Mammary epithelial cell (primary cell): ENCODE measurements at regions of chr17 and their contacts with region 1.

Region 1: DNA sequence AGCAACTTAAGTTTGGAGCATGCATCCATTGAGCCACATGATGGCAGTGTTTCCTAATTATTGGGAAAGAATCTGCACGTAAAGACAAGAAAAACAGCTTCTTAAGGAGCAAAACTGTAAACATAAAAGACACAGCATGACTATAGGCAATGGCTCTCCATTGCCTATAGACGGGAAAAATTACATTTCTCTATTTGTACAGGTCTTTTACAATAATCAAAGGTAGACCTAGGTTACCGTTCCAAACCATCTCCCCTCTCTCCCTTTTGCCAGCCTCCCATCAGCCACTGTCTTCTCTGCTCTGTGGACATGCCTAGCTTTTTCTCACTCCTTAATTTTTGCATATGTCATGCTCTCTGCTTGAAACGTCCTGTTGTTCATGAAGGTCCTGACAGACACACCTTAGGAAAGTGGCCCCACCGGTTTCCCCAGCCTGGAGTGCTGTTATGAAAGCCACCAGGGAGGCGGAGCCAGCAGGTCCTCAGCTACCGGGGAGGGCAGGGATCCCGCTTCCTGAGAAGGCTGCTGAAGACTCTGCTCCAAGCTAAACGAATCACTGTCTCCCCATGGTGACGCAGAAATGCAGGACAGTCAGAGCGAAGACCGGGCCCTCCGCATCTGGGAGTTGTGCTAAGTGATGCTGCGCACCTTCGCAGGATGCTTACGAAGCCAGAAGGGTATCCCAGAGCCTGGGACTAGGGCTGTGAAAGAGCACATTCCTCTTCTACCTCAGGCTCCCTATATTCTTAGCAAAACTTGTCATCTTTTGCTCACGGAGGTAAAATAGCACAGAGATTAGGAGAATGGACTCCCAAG is 2.2 kb upstream of the SLC16A11 start:
- DNase-seq: peak; percentile 84
- H3K4me3 ChIP-seq: peak overlapping the region; percentile 20 to 26 (median 22)
- H3K27ac ChIP-seq: peak overlapping the region; percentile 73
- H3K4me1 ChIP-seq: peaks cover 31% of the 10 kb centered on the region
- H3K27me3 ChIP-seq: peaks cover 9% of the 10 kb centered on the region
- CTCF ChIP-seq: peak; percentile 79 to 88

Region 2: DNA sequence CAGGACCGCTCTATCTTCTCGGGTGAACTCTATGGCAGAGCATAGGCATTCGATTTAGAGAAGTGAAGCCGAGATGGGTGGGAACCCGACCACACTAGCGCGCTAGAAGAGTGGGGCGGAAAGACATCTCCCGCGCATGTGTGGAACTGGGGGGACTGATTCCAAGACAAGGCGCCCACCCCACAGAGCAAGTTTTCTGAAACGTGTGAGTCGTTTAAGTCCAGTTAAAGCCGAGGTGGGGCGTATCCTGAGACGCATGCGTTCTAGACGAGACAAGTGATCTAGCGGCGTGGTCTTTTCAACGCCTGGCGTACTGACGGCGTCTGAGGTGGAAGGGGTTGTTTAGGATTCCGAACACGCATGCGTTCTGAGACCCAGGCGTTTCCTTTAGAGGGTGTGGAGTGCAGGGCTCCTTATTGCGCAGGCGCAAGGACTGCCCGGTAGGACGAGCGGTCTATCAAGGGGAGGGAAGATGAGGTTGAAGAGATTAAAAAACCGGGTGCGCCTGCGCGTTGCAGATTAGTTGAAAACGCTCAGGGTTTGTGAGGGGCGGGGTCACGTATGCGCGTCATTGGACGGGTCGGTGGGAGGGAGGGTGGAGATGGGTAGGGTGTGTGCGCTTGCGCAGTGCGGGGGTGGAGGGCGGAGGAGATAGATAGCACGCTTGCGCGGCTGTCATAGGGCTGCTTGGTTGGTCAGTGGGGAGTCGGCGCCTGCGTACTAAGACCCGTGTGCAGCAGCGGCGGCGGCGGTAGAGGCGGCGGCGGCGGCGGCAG is 261.0 kb after region 1 on chr17 and contains the start of gene EIF5A:
- CTCF ChIA-PET with region 1: interaction called, 12 read pairs
- dilution Hi-C with region 1: no loop called
- in situ Hi-C with region 1: loop called in 1 of 2 experiments (anchors 10 kb)
- intact Hi-C with region 1: no loop called
- DNase-seq: peak; percentile 100
- H3K4me3 ChIP-seq: peak within 1 kb of the TSS; percentile 79 to 91 (median 80)
- H3K27ac ChIP-seq: peak within 1 kb of the TSS; percentile 91
- H3K4me1 ChIP-seq: peaks cover 24% of the 10 kb centered on the region
- H3K27me3 ChIP-seq: no peaks in the 10 kb centered on the region
- CTCF ChIP-seq: no peak
- total RNA-seq, gene EIF5A: 597 to 1,021 TPM

Region 3: DNA sequence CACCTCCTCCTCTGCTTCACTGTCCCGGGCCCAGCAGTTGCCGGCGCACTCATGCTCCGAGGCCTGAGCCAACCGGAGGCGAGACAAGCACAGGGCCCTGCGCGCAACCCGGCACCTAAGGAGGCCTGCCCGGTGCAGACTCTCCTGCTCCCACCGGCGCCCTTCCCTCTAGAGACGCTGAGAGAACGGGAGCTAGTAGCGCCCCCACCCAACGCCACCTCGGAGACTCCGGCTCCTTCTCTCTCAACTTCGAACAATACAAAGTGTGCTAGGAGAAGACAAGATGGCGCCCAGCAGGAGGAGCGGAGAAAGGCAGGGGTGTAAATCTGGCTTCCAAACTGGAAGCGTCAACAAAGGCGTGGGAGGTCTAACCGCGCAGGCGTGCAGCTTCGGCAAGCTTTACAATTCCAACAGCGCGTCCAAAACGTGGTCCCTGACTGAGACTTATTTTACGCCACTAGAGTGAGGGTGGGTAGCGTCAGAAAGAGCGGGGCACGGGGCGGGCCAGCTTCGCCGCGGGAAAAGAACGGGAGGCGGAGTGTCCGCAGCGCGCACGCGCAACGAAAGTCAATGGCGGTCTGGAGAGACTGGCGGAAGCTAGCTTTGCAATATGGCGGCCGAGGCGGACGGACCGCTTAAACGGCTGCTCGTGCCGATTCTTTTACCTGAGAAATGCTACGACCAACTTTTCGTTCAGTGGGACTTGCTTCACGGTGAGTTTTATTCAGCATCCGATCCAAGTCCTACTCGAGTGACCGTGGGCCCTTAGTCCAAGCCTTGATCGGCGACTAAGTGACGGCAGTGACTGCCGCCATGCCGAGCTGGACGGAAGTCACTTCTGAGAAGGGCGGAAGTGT is 537.4 kb after region 1 on chr17 and contains the start of gene MPDU1:
- CTCF ChIA-PET with region 1: no interaction called
- dilution Hi-C with region 1: no loop called
- in situ Hi-C with region 1: no loop called
- intact Hi-C with region 1: loop called (anchors 10 kb)
- DNase-seq: peak; percentile 95
- H3K4me3 ChIP-seq: peak within 1 kb of the TSS; percentile 42 to 63 (median 50)
- H3K27ac ChIP-seq: peak within 1 kb of the TSS; percentile 86
- H3K4me1 ChIP-seq: peaks cover 66% of the 10 kb centered on the region
- H3K27me3 ChIP-seq: no peaks in the 10 kb centered on the region
- CTCF ChIP-seq: no peak
- total RNA-seq, gene MPDU1: 44.8 to 51.2 TPM